ENCODE measurements at regions of chr2 and their contacts with region 1.

Region 1: DNA sequence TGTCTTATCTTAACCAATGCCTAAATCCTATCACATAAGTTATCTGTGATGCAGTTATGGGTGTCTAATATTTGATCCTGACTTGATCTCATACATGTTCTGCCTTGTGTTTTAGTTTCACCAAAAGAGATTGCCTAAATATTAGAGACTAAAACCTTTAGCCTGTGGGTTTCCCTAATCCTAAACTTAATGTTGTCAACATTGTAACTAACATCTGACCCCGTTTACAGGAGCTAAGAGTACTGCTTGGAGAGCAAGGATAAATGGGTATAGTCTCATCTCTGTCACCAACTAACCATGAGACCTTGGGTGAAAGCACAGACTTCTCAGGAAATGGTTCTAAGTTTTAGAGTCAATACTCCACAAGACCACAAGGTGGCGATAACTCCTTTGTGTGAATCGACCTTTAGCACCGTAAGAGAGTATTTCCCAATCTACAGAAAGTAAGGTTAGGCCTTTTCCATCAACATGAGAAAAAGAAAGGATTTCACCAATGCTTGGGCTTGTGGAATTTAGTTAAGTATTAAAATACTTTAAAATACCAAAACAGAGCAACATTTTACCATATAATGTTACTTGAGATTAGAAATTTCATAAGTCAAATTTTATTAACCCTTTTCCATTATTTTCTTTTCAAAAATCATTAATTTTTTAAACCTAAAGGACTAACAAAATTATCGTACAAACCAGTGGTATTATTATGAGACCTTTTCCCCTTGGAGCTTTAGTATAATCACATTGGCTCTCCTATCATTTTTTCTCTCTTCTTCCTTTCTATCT is 60.5 kb downstream of the G6PC2 start:
- DNase-seq: peak; percentile 79 to 85 (median 82)
- H3K4me3 ChIP-seq: no peak overlapping the region
- H3K27ac ChIP-seq: no peak overlapping the region
- H3K4me1 ChIP-seq: peaks cover 3 to 13% (median 9%) of the 10 kb centered on the region in 4 experiments
- H3K27me3 ChIP-seq: no peaks in the 10 kb centered on the region

Region 2: DNA sequence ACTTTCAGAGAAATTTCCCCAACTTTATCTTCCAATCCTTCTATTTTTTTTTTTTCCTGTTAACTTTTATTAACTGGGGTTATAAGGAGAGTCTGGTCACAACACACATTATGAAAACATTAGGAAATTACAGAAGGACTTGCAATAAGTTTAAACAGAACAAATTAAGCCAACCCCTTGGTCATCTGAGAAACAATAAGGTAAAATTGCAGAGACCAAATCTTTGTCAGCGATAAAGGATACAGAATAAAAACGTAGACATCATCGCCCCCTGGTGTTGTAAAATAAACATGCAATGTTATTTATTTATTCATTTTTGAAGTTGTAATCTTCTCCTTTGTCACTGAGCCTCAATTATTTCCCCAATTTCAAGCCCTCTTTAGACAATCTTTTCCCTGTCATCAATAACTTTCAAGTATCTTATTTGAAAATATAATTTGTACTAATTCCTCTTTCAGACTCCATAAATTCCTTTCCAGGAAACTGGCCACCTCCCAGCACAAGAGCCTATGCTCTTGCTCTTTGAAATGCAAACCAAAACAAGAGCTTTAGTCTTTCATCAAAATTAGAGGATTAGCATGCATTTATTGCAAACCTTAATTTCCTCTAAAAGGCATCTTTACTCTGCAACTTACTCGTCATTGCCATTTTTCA is 41.0 kb before region 1 on chr2:
- CTCF ChIA-PET with region 1: no interaction called
- POLR2A ChIA-PET with region 1: no interaction called
- DNase-seq: peak; percentile 48 to 75 (median 67)
- H3K4me3 ChIP-seq: no peak overlapping the region
- H3K27ac ChIP-seq: no peak overlapping the region
- H3K4me1 ChIP-seq: no peaks in the 10 kb centered on the region
- H3K27me3 ChIP-seq: peaks cover 0 to 3% (median 0%) of the 10 kb centered on the region in 5 experiments

Region 3: DNA sequence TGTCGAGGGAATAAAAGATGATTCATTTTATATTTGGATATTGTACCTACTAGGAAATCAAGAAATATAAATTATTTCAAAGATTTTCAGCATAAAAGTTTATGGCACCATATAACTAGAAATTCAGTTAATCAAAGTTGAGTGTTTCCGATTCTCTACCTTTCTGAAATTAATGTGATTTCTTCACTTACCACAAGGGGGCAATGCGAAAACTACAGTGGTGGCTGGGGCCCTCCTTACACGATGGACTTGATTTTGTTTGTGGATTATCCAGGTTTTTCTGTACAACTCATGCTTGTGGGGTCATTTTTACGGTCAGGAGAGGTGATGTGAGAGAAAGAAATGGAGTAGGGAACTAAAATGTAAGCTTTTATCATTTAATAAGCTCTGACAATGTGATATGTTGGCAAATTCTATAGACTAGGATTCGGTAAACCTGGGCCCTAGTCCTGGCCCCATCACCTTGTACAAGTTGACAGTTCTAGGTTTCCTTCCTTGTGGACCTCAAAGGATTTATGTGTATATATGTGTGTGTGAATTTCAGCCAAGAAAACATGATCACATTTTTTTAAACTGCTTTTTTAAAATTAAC is 12.9 kb before region 1 on chr2:
- CTCF ChIA-PET with region 1: interaction called, 14 read pairs
- POLR2A ChIA-PET with region 1: no interaction called
- DNase-seq: peak; percentile 13 to 41 (median 29)
- H3K4me3 ChIP-seq: no peak overlapping the region
- H3K27ac ChIP-seq: no peak overlapping the region
- H3K4me1 ChIP-seq: no peaks in the 10 kb centered on the region
- H3K27me3 ChIP-seq: no peaks in the 10 kb centered on the region

Region 4: GRCh38 chr2:169141713-169142352 is 180.2 kb after region 1 on chr2:
- CTCF ChIA-PET with region 1: interaction called, 25 read pairs
- POLR2A ChIA-PET with region 1: no interaction called
- DNase-seq: peak; percentile 44 to 66 (median 54)
- H3K4me3 ChIP-seq: peak overlapping the region in 1 of 7 experiments; percentile 9
- H3K27ac ChIP-seq: no peak overlapping the region
- H3K4me1 ChIP-seq: peaks cover 0 to 17% (median 7%) of the 10 kb centered on the region in 4 experiments
- H3K27me3 ChIP-seq: no peaks in the 10 kb centered on the region

Region 5: DNA sequence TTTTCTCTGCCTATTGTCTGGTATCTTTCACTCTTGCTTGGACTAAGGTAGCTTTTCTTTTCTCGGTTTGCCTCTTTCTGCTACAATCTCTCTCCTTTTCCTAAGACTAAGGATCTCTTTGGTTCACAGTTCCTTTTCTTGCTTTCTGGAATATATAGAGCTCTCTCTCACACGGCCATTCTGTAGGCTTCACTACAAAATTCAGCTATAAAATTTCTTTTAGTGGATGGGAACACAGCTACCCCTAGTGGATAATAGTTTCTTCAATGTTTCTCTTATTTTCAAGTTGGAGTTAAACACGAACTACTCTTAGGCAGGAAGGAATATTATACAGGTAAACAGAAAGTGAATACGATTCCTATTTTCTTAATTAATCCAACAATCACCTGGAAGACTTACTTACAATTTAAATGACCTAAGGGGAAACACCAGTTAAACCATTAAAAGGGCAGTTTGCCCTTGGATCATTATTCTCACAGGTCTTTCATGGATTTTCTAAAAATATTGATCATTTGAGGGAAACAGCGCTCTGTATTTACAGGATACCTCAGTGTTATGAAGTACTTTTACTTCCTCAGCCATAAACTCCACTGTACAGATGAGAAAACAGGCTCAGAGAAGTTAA is 260.2 kb after region 1 on chr2:
- CTCF ChIA-PET with region 1: interaction called, 15 read pairs
- POLR2A ChIA-PET with region 1: interaction called, 3 read pairs
- DNase-seq: peak; percentile 42 to 60 (median 51)
- H3K4me3 ChIP-seq: no peak overlapping the region
- H3K27ac ChIP-seq: no peak overlapping the region
- H3K4me1 ChIP-seq: peaks cover 0 to 2% (median under 1%) of the 10 kb centered on the region in 4 experiments
- H3K27me3 ChIP-seq: no peaks in the 10 kb centered on the region

Measured in common myeloid progenitor, CD34-positive (primary cell).